MCF 10A (cell line): ENCODE measurements at regions of chr3 and their contacts with region 1.

Region 1: GRCh38 chr3:186540221-186540834 is 3.9 kb downstream of the CRYGS start:
- DNase-seq: peak; percentile 89
- H3K4me3 Mint-ChIP-seq: no peak overlapping the region
- H3K27ac Mint-ChIP-seq: no peak overlapping the region
- H3K4me1 Mint-ChIP-seq: peaks cover 13% of the 10 kb centered on the region
- H3K27me3 Mint-ChIP-seq: no peaks in the 10 kb centered on the region
- CTCF ChIP-seq: peak; percentile 71

Region 2: GRCh38 chr3:185629554-185630181 is 910.7 kb before region 1 on chr3:
- CTCF ChIA-PET with region 1: no interaction called
- POLR2A ChIA-PET with region 1: no interaction called
- intact Hi-C with region 1: no loop called
- DNase-seq: no peak
- H3K4me3 Mint-ChIP-seq: peak overlapping the region; percentile 57
- H3K27ac Mint-ChIP-seq: peak overlapping the region; percentile 95
- H3K4me1 Mint-ChIP-seq: peaks cover 8% of the 10 kb centered on the region
- H3K27me3 Mint-ChIP-seq: no peaks in the 10 kb centered on the region
- CTCF ChIP-seq: no peak

Region 3: DNA sequence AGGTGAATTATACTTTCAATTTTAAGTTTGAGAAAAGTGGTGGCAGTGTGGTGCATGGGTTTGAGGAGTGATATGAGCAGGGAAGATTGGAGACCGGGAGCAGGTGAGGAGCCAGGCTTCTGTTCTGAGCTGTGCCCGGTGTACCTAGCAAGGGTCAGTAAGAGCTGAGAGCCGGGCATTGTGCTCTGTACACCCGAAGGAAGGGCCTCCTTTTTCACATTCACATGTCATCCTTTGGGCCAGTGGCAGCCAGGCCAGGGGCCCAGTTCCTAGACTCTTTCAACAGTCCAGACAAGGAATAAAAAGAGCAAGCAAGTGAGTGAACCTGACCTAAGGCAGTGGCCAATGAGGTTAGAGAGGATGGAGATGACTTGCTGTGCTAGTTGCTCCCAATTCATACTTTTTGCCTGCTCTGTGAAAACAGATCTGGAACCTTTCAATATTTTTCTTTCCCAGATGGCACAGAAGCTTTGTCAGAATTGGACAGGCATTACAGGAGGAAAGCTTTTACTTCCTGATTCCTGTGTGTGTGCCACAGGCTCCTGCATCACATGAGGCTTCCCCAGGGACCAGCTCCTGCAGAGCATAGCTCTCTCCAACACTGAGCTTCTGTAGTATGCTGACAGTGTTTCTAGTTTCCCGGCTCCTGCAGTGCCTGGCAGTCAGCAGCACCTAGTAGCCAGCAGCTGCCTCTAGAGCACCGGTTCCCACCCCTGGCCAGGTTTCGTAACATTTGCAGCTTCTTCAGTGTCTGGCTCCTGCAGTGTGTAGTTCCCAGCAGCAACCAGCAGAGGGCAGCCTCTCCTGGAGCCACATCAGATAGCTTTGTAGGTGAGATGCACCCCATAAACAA is 597.2 kb before region 1 on chr3:
- CTCF ChIA-PET with region 1: interaction called, 24 read pairs
- POLR2A ChIA-PET with region 1: interaction called, 3 read pairs
- intact Hi-C with region 1: no loop called
- DNase-seq: peak; percentile 93
- H3K4me3 Mint-ChIP-seq: no peak overlapping the region
- H3K27ac Mint-ChIP-seq: no peak overlapping the region
- H3K4me1 Mint-ChIP-seq: peaks cover 11% of the 10 kb centered on the region
- H3K27me3 Mint-ChIP-seq: peaks cover 7% of the 10 kb centered on the region
- CTCF ChIP-seq: peak; percentile 98

Region 4: GRCh38 chr3:185983495-185984141 is 556.7 kb before region 1 on chr3:
- CTCF ChIA-PET with region 1: interaction called, 80 read pairs
- POLR2A ChIA-PET with region 1: interaction called, 4 read pairs
- intact Hi-C with region 1: loop called (anchors 1 kb)
- DNase-seq: peak; percentile 85
- H3K4me3 Mint-ChIP-seq: no peak overlapping the region
- H3K27ac Mint-ChIP-seq: no peak overlapping the region
- H3K4me1 Mint-ChIP-seq: peaks cover 12% of the 10 kb centered on the region
- H3K27me3 Mint-ChIP-seq: no peaks in the 10 kb centered on the region
- CTCF ChIP-seq: peak; percentile 90

Region 5: GRCh38 chr3:186108941-186109865 is 431.1 kb before region 1 on chr3 and contains the start of gene ETV5:
- CTCF ChIA-PET with region 1: interaction called, 5 read pairs
- POLR2A ChIA-PET with region 1: no interaction called
- intact Hi-C with region 1: loop called (anchors 10 kb)
- DNase-seq: peak; percentile 99
- H3K4me3 Mint-ChIP-seq: peak within 1 kb of the TSS; percentile 95
- H3K27ac Mint-ChIP-seq: peak within 1 kb of the TSS; percentile 90
- H3K4me1 Mint-ChIP-seq: peaks cover 25% of the 10 kb centered on the region
- H3K27me3 Mint-ChIP-seq: no peaks in the 10 kb centered on the region
- CTCF ChIP-seq: no peak
- total RNA-seq, gene ETV5: 93.0 and 101 TPM in 2 replicates

Region 6: DNA sequence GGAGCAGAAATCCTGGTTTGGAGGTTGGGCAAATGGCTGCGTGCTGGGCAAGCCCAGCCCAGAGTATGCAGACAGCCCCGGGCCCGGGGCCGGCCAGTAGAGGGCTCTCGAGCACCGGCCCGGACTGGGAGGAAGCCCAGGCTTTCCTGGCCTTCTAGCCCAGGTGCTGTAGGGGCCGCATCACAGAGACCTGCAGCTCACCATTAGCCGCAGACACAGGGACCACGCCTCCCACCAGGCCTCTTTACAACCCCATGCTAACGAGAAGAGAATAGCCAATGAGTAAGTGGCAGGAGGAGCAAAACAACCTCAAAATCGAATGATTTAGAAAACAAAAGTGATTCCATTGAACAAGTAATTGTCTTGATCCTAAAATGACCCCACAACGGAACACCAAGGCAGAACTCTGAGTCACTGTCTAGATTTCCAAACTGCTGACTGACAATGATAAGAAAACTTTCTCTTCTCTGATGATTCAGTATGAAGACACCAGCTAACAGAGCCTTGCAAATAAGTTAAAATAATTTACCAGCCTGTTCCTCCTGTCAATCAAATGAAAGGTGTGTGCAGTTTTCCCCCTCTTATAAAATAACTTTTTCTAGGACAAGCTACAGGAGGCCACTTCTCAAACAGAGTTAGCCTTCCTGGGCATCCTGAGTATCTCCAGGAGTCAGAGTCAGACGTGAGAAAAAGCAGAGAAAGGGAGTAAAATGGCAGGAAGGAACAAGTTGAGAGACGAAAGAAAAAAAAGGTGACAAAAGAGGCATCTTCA is 280.5 kb before region 1 on chr3:
- CTCF ChIA-PET with region 1: interaction called, 107 read pairs
- POLR2A ChIA-PET with region 1: interaction called, 7 read pairs
- intact Hi-C with region 1: loop called (anchors 1 kb)
- DNase-seq: peak; percentile 75
- H3K4me3 Mint-ChIP-seq: no peak overlapping the region
- H3K27ac Mint-ChIP-seq: no peak overlapping the region
- H3K4me1 Mint-ChIP-seq: peaks cover 14% of the 10 kb centered on the region
- H3K27me3 Mint-ChIP-seq: peaks cover 11% of the 10 kb centered on the region
- CTCF ChIP-seq: peak; percentile 78

Region 7: GRCh38 chr3:186519021-186519658 is 21.2 kb before region 1 on chr3:
- CTCF ChIA-PET with region 1: interaction called, 11 read pairs
- POLR2A ChIA-PET with region 1: no interaction called
- intact Hi-C with region 1: no loop called
- DNase-seq: no peak
- H3K4me3 Mint-ChIP-seq: no peak overlapping the region
- H3K27ac Mint-ChIP-seq: no peak overlapping the region
- H3K4me1 Mint-ChIP-seq: peaks cover 6% of the 10 kb centered on the region
- H3K27me3 Mint-ChIP-seq: peaks cover 27% of the 10 kb centered on the region
- CTCF ChIP-seq: no peak

Region 8: GRCh38 chr3:186609247-186609868 is 69.0 kb after region 1 on chr3:
- CTCF ChIA-PET with region 1: interaction called, 10 read pairs
- POLR2A ChIA-PET with region 1: interaction called, 3 read pairs
- intact Hi-C with region 1: loop called (anchors 2 kb)
- DNase-seq: peak; percentile 74
- H3K4me3 Mint-ChIP-seq: no peak overlapping the region
- H3K27ac Mint-ChIP-seq: peak overlapping the region; percentile 27
- H3K4me1 Mint-ChIP-seq: peaks cover 7% of the 10 kb centered on the region
- H3K27me3 Mint-ChIP-seq: no peaks in the 10 kb centered on the region
- CTCF ChIP-seq: peak; percentile 57

Region 9: GRCh38 chr3:187025656-187026316 is 485.5 kb after region 1 on chr3:
- CTCF ChIA-PET with region 1: no interaction called
- POLR2A ChIA-PET with region 1: no interaction called
- intact Hi-C with region 1: no loop called
- DNase-seq: no peak
- H3K4me3 Mint-ChIP-seq: no peak overlapping the region
- H3K27ac Mint-ChIP-seq: no peak overlapping the region
- H3K4me1 Mint-ChIP-seq: peaks cover 5% of the 10 kb centered on the region
- H3K27me3 Mint-ChIP-seq: no peaks in the 10 kb centered on the region
- CTCF ChIP-seq: no peak